ENCODE measurements at regions of chr4 and their contacts with region 1.

Region 1: DNA sequence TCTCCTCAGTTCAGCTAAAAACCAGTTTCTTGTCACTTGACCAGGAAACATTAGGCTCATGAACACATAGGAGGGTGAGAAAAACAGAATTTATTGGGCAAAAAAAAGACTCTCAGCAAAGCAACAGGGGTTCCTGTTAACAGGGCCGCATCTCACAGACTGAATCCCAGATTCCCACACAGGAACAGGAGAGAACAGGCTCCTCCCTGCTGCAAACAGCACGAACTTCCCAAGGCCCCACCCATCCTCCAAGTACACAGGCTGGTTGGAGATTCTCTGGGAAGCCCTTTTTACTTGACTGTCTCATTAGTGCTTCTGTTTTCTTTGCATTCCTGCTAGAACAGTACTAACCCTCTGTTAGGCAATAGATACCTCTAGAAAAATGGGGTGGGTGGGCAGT is 52.4 kb upstream of the IL21 start:
- DNase-seq: no peak
- H3K4me3 ChIP-seq: no peak overlapping the region
- H3K27ac ChIP-seq: peak overlapping the region; percentile 36
- H3K4me1 ChIP-seq: peaks cover 38% of the 10 kb centered on the region
- H3K27me3 ChIP-seq: no peaks in the 10 kb centered on the region
- CTCF ChIP-seq: no peak
- POLR2A ChIP-seq: no peak

Region 2: DNA sequence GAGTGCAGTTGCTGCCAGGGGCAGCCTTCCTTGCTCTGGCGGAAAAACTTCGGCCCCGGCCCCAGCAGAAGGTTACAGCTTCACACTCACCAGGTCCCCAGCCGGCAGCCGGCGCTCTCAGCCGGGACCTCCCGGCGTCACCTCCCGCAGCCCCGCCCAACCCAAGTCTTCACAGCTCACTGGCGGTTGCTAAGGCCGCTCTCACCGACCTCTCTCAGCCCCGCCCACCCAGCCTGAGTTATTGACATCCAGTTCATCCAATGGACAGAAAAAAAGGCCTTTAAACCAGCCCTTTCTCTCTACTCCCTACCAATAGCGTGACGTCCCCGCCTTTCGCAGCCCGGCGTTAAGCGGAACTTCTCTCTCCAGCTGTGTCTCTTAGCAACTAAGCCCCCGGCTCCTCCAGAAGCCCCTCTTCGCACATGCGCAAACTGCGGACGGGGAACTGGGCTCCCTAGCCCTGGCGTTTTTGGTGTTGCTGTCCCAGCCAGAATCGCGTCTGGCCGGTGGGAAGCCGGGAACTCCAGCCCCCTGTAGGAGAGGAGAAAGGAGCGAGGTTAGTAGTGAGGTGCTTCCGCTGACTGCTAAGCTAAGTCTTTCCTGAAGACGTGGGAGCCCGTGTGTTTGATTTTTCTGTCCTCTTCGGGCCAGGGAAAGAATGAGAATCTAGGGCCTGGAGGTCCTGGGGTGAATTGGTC is 59.2 kb after region 1 on chr4 and contains the start of gene BBS12:
- CTCF ChIA-PET with region 1: no interaction called
- POLR2A ChIA-PET with region 1: interaction called, 3 read pairs
- dilution Hi-C with region 1: no loop called
- intact Hi-C with region 1: loop called (anchors 5 kb)
- DNase-seq: peak; percentile 100
- H3K4me3 ChIP-seq: peak within 1 kb of the TSS; percentile 62 to 84 (median 82)
- H3K27ac ChIP-seq: peak within 1 kb of the TSS; percentile 83
- H3K4me1 ChIP-seq: peaks cover 7% of the 10 kb centered on the region
- H3K27me3 ChIP-seq: no peaks in the 10 kb centered on the region
- CTCF ChIP-seq: peak; percentile 34 to 62
- POLR2A ChIP-seq: no peak
- total RNA-seq, gene BBS12: 2.1 and 2.3 TPM in 2 replicates

Region 3: GRCh38 chr4:122922877-122923511 is 249.7 kb after region 1 on chr4:
- CTCF ChIA-PET with region 1: no interaction called
- POLR2A ChIA-PET with region 1: no interaction called
- dilution Hi-C with region 1: no loop called
- intact Hi-C with region 1: loop called (anchors 2 kb)
- DNase-seq: peak; percentile 92
- H3K4me3 ChIP-seq: peak overlapping the region; percentile 75 to 90 (median 81)
- H3K27ac ChIP-seq: peak overlapping the region; percentile 26
- H3K4me1 ChIP-seq: peaks cover 18% of the 10 kb centered on the region
- H3K27me3 ChIP-seq: no peaks in the 10 kb centered on the region
- CTCF ChIP-seq: no peak
- POLR2A ChIP-seq: peak; percentile 41